Panc1 (cell line): ENCODE measurements at regions of chrX and their contacts with region 1.

Region 1: GRCh38 chrX:136162831-136163570 is 15.7 kb downstream of the FHL1 start:
- DNase-seq: peak; percentile 20
- ATAC-seq: peak; percentile 96
- H3K4me3 ChIP-seq: no peak overlapping the region
- H3K27ac ChIP-seq: no peak overlapping the region
- H3K4me1 ChIP-seq: 0 out of 2 replicates have a peak, but pooled peaks cover 3% of the 10 kb centered on the region
- H3K27me3 ChIP-seq: no peaks in the 10 kb centered on the region
- CTCF ChIP-seq: peak; percentile 89

Region 2: GRCh38 chrX:136214551-136214950 is 51.5 kb after region 1 on chrX:
- CTCF ChIA-PET with region 1: interaction called, 4 read pairs
- POLR2A ChIA-PET with region 1: no interaction called
- in situ Hi-C with region 1: no loop called
- intact Hi-C with region 1: loop called (anchors 10 kb)
- DNase-seq: no peak
- ATAC-seq: peak; percentile 73
- H3K4me3 ChIP-seq: no peak overlapping the region
- H3K27ac ChIP-seq: no peak overlapping the region
- H3K4me1 ChIP-seq: no peaks in the 10 kb centered on the region
- H3K27me3 ChIP-seq: no peaks in the 10 kb centered on the region
- CTCF ChIP-seq: no peak